ENCODE measurements at regions of chr1 and their contacts with region 1.

Region 1: DNA sequence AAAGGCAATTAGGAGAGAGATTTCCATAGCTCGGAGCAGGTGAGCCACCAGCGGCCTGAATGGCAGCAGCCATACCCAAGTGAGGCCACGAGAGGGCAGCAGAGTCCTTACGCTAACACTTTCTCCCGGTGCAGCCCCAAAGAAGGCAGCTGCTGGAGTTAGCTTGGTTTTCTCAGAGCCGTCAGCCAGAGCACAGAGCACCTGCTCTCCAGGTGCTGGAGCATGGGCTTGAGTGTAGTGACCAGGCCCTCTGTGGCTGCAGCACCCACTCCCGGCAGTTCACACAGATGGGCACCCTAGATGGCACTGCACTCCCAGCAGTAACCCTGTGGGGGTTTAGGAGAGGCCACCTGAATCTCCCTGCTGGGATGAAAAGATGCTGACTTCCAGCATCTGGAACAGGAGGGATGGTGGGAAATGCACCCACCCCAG is 45.8 kb downstream of the TMCC2 start:
- DNase-seq: peak; percentile 77 to 87 (median 80)
- ATAC-seq: peak; percentile 93
- H3K4me3 ChIP-seq: peak overlapping the region; percentile 35
- H3K4me3 Mint-ChIP-seq: peak overlapping the region in 9 of 10 donors; percentile 60 to 77 (median 73)
- H3K27ac ChIP-seq: no peak overlapping the region
- H3K27ac Mint-ChIP-seq: peak overlapping the region in 8 of 9 donors; percentile 70 to 93 (median 80)
- H3K4me1 ChIP-seq: peaks cover 22 to 42% of the 10 kb centered on the region in 2 donors
- H3K4me1 Mint-ChIP-seq: peaks cover 16 to 48% (median 36%) of the 10 kb centered on the region in 7 donors
- H3K27me3 ChIP-seq: no peaks in the 10 kb centered on the region
- H3K27me3 Mint-ChIP-seq: peaks cover 0 to under 1% (median 0%) of the 10 kb centered on the region in 5 donors

Region 2: DNA sequence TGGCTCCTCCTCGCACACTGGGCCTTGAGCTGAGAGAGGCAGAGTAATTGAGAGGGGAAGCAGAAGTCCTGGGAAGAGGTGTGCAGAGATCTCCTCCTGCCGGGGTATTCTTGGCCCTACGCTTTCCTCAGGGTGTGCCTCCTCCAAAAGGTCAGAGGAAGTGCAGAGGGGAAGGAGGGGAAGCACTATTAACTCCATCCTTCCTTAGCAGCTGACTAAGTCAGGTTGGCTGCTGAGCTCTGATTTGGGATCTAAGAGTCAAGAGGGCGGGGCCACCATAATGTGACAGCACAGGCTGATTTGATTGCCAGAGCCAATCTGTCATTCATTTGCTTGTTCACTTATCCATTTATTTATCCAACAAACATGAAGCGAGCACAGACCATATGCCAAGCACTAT is 1634.6 kb before region 1 on chr1:
- CTCF ChIA-PET with region 1: no interaction called
- POLR2A ChIA-PET with region 1: no interaction called
- intact Hi-C with region 1: no loop called
- DNase-seq: peak in 1 of 9 donors; percentile 8
- ATAC-seq: peak; percentile 87
- H3K4me3 ChIP-seq: no peak overlapping the region
- H3K4me3 Mint-ChIP-seq: peak overlapping the region; percentile 30 to 72 (median 58)
- H3K27ac ChIP-seq: no peak overlapping the region
- H3K27ac Mint-ChIP-seq: peak overlapping the region in 5 of 9 donors; percentile 21 to 91 (median 52)
- H3K4me1 ChIP-seq: peaks cover 12 to 17% of the 10 kb centered on the region in 2 donors
- H3K4me1 Mint-ChIP-seq: peaks cover 45 to 69% (median 49%) of the 10 kb centered on the region in 7 donors
- H3K27me3 ChIP-seq: no peaks in the 10 kb centered on the region
- H3K27me3 Mint-ChIP-seq: no peaks in the 10 kb centered on the region

Region 3: DNA sequence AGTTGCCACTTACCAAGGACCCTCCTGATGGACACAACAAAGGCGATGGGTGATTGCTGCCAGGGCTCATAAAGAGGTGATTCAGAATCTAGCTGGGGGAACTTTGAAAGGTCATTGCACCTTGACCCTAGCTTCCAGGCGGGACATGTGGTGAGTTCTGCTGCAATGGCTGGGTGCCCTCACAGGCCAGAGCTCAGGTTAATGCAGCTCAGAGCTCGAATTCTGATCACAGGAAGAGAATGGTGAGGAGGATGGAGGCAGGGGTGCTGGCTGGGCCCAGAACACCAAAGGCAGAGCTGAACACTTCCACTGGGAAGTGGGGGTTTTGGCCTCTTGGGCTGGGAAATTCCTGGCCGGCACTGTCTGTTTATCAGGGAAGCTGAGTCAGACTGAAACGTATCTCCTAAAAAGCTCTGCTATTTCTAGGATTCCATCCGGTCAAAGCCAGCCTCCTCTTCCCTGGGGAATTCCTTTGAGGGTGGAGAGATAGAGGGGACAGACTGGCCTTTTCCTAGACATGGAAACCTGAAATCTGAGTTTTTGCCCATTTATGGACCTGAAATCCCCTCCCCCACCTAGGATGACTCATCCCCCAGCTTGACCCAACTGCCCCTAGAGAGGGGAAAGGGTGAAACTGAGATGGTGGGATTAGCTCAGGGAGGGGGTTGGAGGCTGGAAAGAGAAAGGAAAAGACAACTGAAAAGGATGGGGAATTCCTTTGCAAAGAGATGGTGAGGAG is 20.8 kb after region 1 on chr1:
- CTCF ChIA-PET with region 1: interaction called, 148 read pairs
- POLR2A ChIA-PET with region 1: interaction called, 293 read pairs
- intact Hi-C with region 1: no loop called
- DNase-seq: no peak
- ATAC-seq: no peak
- H3K4me3 ChIP-seq: no peak overlapping the region
- H3K4me3 Mint-ChIP-seq: peak overlapping the region in 4 of 10 donors; percentile 10 to 51 (median 30)
- H3K27ac ChIP-seq: no peak overlapping the region
- H3K27ac Mint-ChIP-seq: peak overlapping the region in 8 of 9 donors; percentile 42 to 96 (median 76)
- H3K4me1 ChIP-seq: peaks cover 12 to 41% of the 10 kb centered on the region in 2 donors
- H3K4me1 Mint-ChIP-seq: peaks cover 40 to 93% (median 84%) of the 10 kb centered on the region in 7 donors
- H3K27me3 ChIP-seq: no peaks in the 10 kb centered on the region
- H3K27me3 Mint-ChIP-seq: peaks cover 0 to 7% (median 0%) of the 10 kb centered on the region in 5 donors

Region 4: GRCh38 chr1:205335643-205336091 is 62.1 kb after region 1 on chr1:
- CTCF ChIA-PET with region 1: interaction called, 955 read pairs
- POLR2A ChIA-PET with region 1: interaction called, 1,119 read pairs
- intact Hi-C with region 1: no loop called
- DNase-seq: peak; percentile 55 to 81 (median 71)
- ATAC-seq: peak; percentile 96
- H3K4me3 ChIP-seq: no peak overlapping the region
- H3K4me3 Mint-ChIP-seq: no peak overlapping the region
- H3K27ac ChIP-seq: no peak overlapping the region
- H3K27ac Mint-ChIP-seq: no peak overlapping the region
- H3K4me1 ChIP-seq: no peaks in the 10 kb centered on the region
- H3K4me1 Mint-ChIP-seq: peaks cover 0 to 5% (median 0%) of the 10 kb centered on the region in 7 donors
- H3K27me3 ChIP-seq: no peaks in the 10 kb centered on the region
- H3K27me3 Mint-ChIP-seq: peaks cover 0 to 40% (median 0%) of the 10 kb centered on the region in 5 donors

Region 5: GRCh38 chr1:205430696-205431305 is 157.2 kb after region 1 on chr1:
- CTCF ChIA-PET with region 1: interaction called, 3 read pairs
- POLR2A ChIA-PET with region 1: no interaction called
- intact Hi-C with region 1: loop called in 1 of 2 experiments (anchors 2 kb)
- DNase-seq: peak; percentile 21 to 59 (median 51)
- ATAC-seq: peak; percentile 79
- H3K4me3 ChIP-seq: peak overlapping the region; percentile 44
- H3K4me3 Mint-ChIP-seq: peak overlapping the region; percentile 75 to 92 (median 86)
- H3K27ac ChIP-seq: no peak overlapping the region
- H3K27ac Mint-ChIP-seq: peak overlapping the region in 7 of 9 donors; percentile 52 to 88 (median 63)
- H3K4me1 ChIP-seq: peaks cover 0 to 6% of the 10 kb centered on the region in 2 donors
- H3K4me1 Mint-ChIP-seq: peaks cover 12 to 15% (median 15%) of the 10 kb centered on the region in 7 donors
- H3K27me3 ChIP-seq: no peaks in the 10 kb centered on the region
- H3K27me3 Mint-ChIP-seq: peaks cover 18 to 49% (median 22%) of the 10 kb centered on the region in 5 donors

Region 6: GRCh38 chr1:205458777-205459566 is 185.4 kb after region 1 on chr1:
- CTCF ChIA-PET with region 1: no interaction called
- POLR2A ChIA-PET with region 1: no interaction called
- intact Hi-C with region 1: no loop called
- DNase-seq: peak in 4 of 9 donors; percentile 22 to 38 (median 29)
- ATAC-seq: peak; percentile 53
- H3K4me3 ChIP-seq: no peak overlapping the region
- H3K4me3 Mint-ChIP-seq: peak overlapping the region in 1 of 10 donors; percentile 34
- H3K27ac ChIP-seq: no peak overlapping the region
- H3K27ac Mint-ChIP-seq: no peak overlapping the region
- H3K4me1 ChIP-seq: peaks cover 9 to 17% of the 10 kb centered on the region in 2 donors
- H3K4me1 Mint-ChIP-seq: peaks cover 6 to 20% (median 16%) of the 10 kb centered on the region in 7 donors
- H3K27me3 ChIP-seq: peaks cover 17 to 22% of the 10 kb centered on the region in 2 donors
- H3K27me3 Mint-ChIP-seq: peaks cover 52 to 61% (median 59%) of the 10 kb centered on the region in 5 donors